Endothelial cell of umbilical vein (primary cell): ENCODE measurements at regions of chr5 and their contacts with region 1.

Region 1: DNA sequence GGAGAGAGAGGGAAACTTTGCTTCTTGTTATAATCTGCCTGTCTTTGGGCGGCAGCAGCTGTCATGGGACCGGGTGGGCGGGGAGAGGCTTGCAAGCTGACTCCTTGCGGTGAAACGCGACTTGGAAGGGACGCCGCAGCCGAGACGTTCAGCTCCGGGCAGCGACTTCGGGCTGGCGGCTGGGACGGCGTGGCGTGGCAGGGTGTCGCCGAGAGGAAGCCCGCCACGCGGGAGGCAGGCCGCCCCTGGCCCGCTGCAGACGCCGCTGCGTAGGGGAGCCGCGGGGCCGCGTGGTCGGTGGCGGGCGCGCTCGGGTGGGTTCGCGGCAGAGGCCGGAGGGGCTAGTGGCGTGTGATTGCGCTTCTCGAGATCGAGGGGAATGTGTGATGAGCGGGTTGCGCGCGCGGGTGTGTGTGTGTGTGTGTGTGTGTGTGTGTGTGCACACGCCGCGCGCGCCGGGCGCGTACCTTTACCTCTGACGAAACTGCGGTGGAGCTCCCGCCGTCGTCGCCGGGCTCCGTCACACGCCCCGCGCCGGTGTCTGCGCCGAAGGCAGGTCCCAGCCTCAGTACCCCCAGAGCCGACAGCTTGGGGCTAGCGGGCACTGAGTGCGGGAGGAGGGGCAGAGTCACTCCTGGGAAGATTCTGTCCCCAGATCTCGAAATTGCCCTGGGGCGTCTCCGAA is 1.7 kb downstream of the PPARGC1B start:
- DNase-seq: peak; percentile 63
- H3K4me3 ChIP-seq: peak overlapping the region; percentile 2 to 83 (median 53)
- H3K27ac ChIP-seq: no peak overlapping the region
- H3K4me1 ChIP-seq: peaks cover 9% of the 10 kb centered on the region
- H3K27me3 ChIP-seq: no peaks in the 10 kb centered on the region
- CTCF ChIP-seq: no peak
- POLR2A ChIP-seq: no peak

Region 2: GRCh38 chr5:149804478-149805450 is 73.0 kb after region 1 on chr5:
- CTCF ChIA-PET with region 1: no interaction called
- POLR2A ChIA-PET with region 1: no interaction called
- dilution Hi-C with region 1: no loop called
- intact Hi-C with region 1: loop called (anchors 5 kb)
- DNase-seq: no peak
- H3K4me3 ChIP-seq: no peak overlapping the region
- H3K27ac ChIP-seq: no peak overlapping the region
- H3K4me1 ChIP-seq: peaks cover 6% of the 10 kb centered on the region
- H3K27me3 ChIP-seq: no peaks in the 10 kb centered on the region
- CTCF ChIP-seq: no peak
- POLR2A ChIP-seq: no peak